Spleen (tissue), 13 donors: ENCODE measurements at regions of chr17 and their contacts with region 1.

Region 1: DNA sequence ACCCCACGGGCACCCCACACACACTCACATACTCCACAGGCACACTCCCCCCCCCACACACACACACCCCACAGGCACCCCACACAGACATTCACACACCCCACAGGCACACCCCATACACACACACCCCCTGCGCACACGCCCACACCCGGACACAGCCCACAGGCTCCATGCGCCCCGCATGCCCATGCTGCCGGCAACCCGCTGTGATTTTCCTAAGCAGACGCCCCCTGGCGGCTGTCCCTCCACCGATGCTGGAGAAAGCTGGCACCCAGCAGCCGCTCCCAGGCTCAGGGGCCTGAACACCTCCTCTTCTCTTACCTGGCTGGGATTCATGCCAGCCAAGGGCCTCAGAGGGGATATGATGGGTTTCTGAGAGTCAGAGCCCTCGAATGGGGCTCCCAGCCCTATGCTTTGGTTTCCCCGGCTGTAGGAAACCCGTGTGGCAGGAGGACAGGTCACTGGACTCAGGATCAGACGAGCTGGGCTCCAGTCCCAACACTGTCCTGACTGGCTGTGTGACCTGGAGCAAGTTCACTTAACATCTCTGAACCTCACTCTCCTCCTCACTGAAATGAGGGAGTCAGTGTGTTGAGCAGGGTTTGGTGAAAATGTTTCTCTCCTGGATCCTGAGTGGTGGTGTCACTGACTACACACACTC is 19.6 kb upstream of the TNFRSF13B start:
- DNase-seq: peak; percentile 96
- H3K4me3 ChIP-seq: no peak overlapping the region
- H3K27ac ChIP-seq: peak overlapping the region in 3 of 8 donors; percentile 37 to 92 (median 88)
- H3K4me1 ChIP-seq: peaks cover 23 to 51% (median 42%) of the 10 kb centered on the region in 6 donors
- H3K27me3 ChIP-seq: no peaks in the 10 kb centered on the region
- CTCF ChIP-seq: peak; percentile 65 to 90 (median 85)
- POLR2A ChIP-seq: no peak

Region 2: GRCh38 chr17:16649585-16649984 is 341.9 kb before region 1 on chr17:
- intact Hi-C with region 1: loop called (anchors 10 kb)
- DNase-seq: no peak
- H3K4me3 ChIP-seq: no peak overlapping the region
- H3K27ac ChIP-seq: no peak overlapping the region
- H3K4me1 ChIP-seq: peaks cover 10 to 29% (median 20%) of the 10 kb centered on the region in 6 donors
- H3K27me3 ChIP-seq: no peaks in the 10 kb centered on the region
- CTCF ChIP-seq: no peak
- POLR2A ChIP-seq: no peak

Region 3: GRCh38 chr17:16905593-16906191 is 85.8 kb before region 1 on chr17:
- intact Hi-C with region 1: no loop called
- DNase-seq: no peak
- H3K4me3 ChIP-seq: no peak overlapping the region
- H3K27ac ChIP-seq: no peak overlapping the region
- H3K4me1 ChIP-seq: no peaks in the 10 kb centered on the region
- H3K27me3 ChIP-seq: peaks cover 0 to 29% (median 0%) of the 10 kb centered on the region in 7 donors
- CTCF ChIP-seq: no peak
- POLR2A ChIP-seq: no peak

Region 4: GRCh38 chr17:17079751-17080150 is 88.3 kb after region 1 on chr17:
- intact Hi-C with region 1: no loop called
- DNase-seq: peak; percentile 30
- H3K4me3 ChIP-seq: no peak overlapping the region
- H3K27ac ChIP-seq: peak overlapping the region in 1 of 8 donors; percentile 15
- H3K4me1 ChIP-seq: peaks cover 9 to 76% (median 44%) of the 10 kb centered on the region in 6 donors
- H3K27me3 ChIP-seq: no peaks in the 10 kb centered on the region
- CTCF ChIP-seq: no peak
- POLR2A ChIP-seq: no peak